ENCODE measurements at regions of chr10 and their contacts with region 1.

Region 1: GRCh38 chr10:14084875-14085274 is 245.8 kb downstream of the FRMD4A start:
- DNase-seq: peak in 1 of 2 experiments; percentile 81
- H3K4me3 ChIP-seq: no peak overlapping the region; the same call in 1 of the 2 replicates
- H3K27ac ChIP-seq: 0 out of 2 replicates have a peak overlapping the region, but pooled peaks have one; percentile 38
- H3K4me1 ChIP-seq: peaks cover 20% of the 10 kb centered on the region
- H3K27me3 ChIP-seq: no peaks in the 10 kb centered on the region
- CTCF ChIP-seq: no peak

Region 2: DNA sequence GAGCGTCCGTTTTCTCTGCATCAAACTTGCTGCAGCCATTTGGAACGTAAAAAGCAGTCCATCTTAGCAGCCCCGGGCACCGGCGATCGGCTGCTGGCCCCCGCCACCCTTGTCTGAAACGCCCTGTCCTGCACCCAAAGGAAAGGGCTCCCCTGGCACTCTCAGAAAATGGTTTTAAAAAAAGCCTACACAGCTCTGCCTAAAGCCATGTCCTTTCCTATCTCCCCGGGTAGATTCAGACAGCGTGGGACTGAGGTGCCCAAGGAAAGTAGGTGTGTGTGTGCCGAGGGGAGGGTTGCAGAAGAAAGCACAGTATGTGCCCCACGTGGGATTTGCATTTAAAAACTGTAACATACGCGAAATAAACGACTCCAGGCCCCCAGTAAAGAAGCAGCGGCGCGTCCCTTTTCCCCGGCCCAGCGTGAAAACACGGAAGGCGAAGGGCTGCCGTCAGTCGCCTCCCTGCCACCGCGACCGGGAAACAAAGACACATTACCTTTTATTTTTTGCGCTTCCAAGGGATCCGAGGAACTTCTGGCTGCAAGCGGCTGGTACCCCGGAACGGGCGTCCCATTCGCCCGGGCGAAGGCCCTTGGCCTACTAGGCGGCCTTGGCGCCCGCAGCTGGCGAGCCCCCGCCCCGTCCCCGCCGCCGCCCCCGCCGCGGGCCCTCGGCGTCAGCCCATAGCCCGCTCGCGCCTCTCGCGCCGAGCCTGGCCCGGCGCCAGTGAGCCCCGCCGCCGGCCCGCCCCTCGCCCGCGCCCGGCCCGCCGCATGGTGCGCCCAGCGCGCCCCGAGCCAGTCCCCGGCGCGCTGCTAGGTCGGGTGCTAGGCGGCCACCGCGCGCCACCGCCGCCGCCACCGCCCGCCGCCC is 193.5 kb before region 1 on chr10:
- CTCF ChIA-PET with region 1: no interaction called
- POLR2A ChIA-PET with region 1: no interaction called
- intact Hi-C with region 1: loop called (anchors 10 kb)
- DNase-seq: peak in 1 of 2 experiments; percentile 18
- H3K4me3 ChIP-seq: no peak overlapping the region
- H3K27ac ChIP-seq: no peak overlapping the region
- H3K4me1 ChIP-seq: peaks cover 40% of the 10 kb centered on the region
- H3K27me3 ChIP-seq: no peaks in the 10 kb centered on the region
- CTCF ChIP-seq: no peak

Measured in PC-9 (cell line).